Sigmoid colon (tissue), 7 donors: ENCODE measurements at regions of chr9 and their contacts with region 1.

Region 1: GRCh38 chr9:132877824-132878694 is at the start of gene AK8:
- DNase-seq: peak; percentile 86
- H3K4me3 ChIP-seq: peak within 1 kb of the TSS; percentile 78 to 85 (median 82)
- H3K27ac ChIP-seq: peak within 1 kb of the TSS; percentile 80 to 90 (median 88)
- H3K4me1 ChIP-seq: peaks cover 0 to 12% (median 2%) of the 10 kb centered on the region in 4 donors
- H3K27me3 ChIP-seq: no peaks in the 10 kb centered on the region
- CTCF ChIP-seq: no peak
- EP300 ChIP-seq: no peak
- POLR2A ChIP-seq: peak in 1 of 2 donors; percentile 26
- total RNA-seq, gene AK8: 0.36 to 1.2 (median 0.81) TPM in 3 of 4 donors, not detected in the other

Region 2: DNA sequence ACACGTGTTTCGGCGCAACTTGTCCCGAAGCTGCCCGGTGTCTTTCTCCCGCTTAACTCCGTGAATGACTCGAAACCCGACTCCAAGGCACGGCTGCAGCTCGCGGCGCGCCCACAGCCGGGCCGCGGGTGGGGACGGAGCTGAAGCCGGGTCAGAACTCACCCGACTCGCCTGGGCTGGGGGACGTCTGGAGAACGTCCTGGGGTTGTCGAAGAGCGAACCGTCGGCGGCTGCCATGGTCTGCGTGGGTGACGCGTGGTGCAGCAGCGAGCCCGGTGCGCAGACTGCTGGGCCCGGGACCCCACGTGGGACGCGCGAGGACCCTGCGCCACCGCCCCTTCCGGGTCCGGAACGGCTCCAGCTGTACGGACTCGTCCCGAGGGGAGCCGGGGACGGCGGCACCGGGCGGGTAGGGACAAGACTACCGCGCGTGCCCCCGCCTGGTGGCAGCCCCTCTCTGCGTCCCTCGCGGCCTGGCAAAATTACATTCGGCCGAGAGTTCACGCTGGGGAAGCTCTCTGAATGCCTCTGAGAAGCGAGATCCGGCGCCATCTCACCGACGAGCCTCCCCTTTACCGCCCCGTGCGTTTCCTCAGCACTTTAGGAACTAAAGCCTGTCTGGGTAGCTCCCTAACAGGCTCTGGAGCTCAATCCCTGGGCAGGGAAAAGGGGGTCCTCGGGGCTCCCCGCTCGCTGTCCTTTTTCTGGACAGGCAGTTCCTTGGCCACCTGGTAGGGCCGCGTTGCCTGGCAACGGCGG is 208.2 kb before region 1 on chr9 and contains the start of gene DDX31:
- intact Hi-C with region 1: loop called (anchors 5 kb)
- DNase-seq: peak; percentile 94
- H3K4me3 ChIP-seq: peak within 1 kb of the TSS; percentile 78 to 86 (median 80)
- H3K27ac ChIP-seq: peak within 1 kb of the TSS; percentile 93 to 98 (median 94)
- H3K4me1 ChIP-seq: peaks cover 0 to 44% (median 38%) of the 10 kb centered on the region in 4 donors
- H3K27me3 ChIP-seq: no peaks in the 10 kb centered on the region
- CTCF ChIP-seq: no peak
- EP300 ChIP-seq: no peak
- POLR2A ChIP-seq: peak in 1 of 2 donors; percentile 12
- total RNA-seq, gene DDX31: 5.7 to 7.7 (median 7.1) TPM

Region 3: DNA sequence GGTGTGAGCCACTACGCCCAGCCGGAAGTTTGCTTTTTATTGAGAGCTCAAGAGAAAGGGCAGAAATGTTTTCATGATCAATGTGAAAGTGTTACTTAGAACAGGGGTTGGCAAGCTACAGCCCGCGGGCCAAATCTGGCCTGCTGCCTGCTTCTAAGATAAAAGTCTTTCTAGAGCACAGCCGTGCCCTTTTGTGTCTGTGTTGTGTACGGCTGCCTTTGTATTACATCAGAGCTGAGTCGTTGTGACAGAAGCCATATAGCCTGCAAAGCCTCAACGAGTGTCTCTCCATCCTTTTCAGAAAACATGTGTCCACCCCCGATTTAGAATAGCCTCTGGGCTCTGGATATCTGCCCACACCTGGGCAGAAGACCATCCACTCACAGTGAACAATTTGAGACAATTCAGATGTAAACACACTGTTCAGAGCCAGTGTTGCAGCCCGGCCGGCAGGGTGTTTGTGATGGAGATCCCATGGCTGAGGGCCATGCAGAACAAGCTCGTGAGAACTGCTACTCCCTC is 28.8 kb before region 1 on chr9:
- intact Hi-C with region 1: loop called (anchors 1 kb)
- DNase-seq: peak; percentile 93
- H3K4me3 ChIP-seq: peak overlapping the region in 2 of 4 donors; percentile 22 to 30
- H3K27ac ChIP-seq: peak overlapping the region in 3 of 4 donors; percentile 68 to 81 (median 77)
- H3K4me1 ChIP-seq: peaks cover 0 to 18% (median 5%) of the 10 kb centered on the region in 4 donors
- H3K27me3 ChIP-seq: no peaks in the 10 kb centered on the region
- CTCF ChIP-seq: peak in 2 of 4 experiments; percentile 9 to 15
- EP300 ChIP-seq: peak; percentile 61 to 97 (median 68)
- POLR2A ChIP-seq: no peak

Region 4: DNA sequence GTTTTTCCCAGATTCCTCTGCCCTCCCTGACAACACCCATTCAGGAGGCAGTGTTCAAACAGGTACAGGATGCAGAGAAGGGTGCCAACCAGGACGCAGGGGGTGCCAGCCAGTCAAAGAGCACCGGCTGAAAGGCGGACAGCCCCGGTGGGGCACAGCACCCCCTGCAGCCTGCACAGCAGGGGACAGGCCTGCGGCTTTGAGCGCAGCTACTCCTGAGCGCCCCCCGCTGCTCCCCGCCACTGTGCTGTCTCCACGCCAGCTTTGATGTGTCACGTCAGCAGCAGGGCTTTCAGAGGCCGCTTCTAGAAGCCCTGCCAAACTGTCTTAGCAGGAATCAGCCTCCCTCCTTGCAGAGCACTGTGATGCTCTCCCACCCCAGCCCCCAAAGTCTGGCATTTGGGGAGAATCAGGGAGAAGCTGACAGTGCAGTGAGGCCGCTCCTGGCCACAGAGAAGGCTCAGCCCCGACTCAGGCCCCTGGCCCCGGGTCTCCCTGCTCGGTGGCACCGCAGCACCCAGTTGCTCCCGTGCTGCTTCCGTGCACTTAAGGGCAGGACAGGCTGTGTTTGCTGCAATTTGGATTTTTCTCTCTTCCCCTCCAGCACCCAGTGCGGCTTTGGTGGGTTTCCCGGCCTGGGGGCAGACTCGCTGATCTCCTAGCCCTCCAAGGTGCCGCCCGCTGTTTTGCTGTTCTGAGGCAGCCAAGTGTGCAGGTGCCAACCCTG is 20.3 kb before region 1 on chr9:
- intact Hi-C with region 1: loop called (anchors 2 kb)
- DNase-seq: peak; percentile 74
- H3K4me3 ChIP-seq: no peak overlapping the region
- H3K27ac ChIP-seq: peak overlapping the region in 3 of 4 donors; percentile 60 to 86 (median 64)
- H3K4me1 ChIP-seq: peaks cover 0 to 33% (median 16%) of the 10 kb centered on the region in 4 donors
- H3K27me3 ChIP-seq: no peaks in the 10 kb centered on the region
- CTCF ChIP-seq: no peak
- EP300 ChIP-seq: no peak
- POLR2A ChIP-seq: no peak

Region 5: GRCh38 chr9:132944302-132945185 is 66.5 kb after region 1 on chr9 and contains the start of gene TSC1:
- intact Hi-C with region 1: loop called (anchors 5 kb)
- DNase-seq: peak; percentile 98
- H3K4me3 ChIP-seq: peak within 1 kb of the TSS; percentile 94 to 100 (median 99)
- H3K27ac ChIP-seq: peak within 1 kb of the TSS; percentile 94 to 95 (median 94)
- H3K4me1 ChIP-seq: peaks cover 0 to 26% (median 23%) of the 10 kb centered on the region in 4 donors
- H3K27me3 ChIP-seq: no peaks in the 10 kb centered on the region
- CTCF ChIP-seq: no peak
- EP300 ChIP-seq: peak in 3 of 4 donors; percentile 16 to 67 (median 43)
- POLR2A ChIP-seq: peak; percentile 33 to 36
- total RNA-seq, gene TSC1: 35.3 to 55.9 (median 36.4) TPM